ENCODE measurements at regions of chr1 and their contacts with region 1.

Region 1: DNA sequence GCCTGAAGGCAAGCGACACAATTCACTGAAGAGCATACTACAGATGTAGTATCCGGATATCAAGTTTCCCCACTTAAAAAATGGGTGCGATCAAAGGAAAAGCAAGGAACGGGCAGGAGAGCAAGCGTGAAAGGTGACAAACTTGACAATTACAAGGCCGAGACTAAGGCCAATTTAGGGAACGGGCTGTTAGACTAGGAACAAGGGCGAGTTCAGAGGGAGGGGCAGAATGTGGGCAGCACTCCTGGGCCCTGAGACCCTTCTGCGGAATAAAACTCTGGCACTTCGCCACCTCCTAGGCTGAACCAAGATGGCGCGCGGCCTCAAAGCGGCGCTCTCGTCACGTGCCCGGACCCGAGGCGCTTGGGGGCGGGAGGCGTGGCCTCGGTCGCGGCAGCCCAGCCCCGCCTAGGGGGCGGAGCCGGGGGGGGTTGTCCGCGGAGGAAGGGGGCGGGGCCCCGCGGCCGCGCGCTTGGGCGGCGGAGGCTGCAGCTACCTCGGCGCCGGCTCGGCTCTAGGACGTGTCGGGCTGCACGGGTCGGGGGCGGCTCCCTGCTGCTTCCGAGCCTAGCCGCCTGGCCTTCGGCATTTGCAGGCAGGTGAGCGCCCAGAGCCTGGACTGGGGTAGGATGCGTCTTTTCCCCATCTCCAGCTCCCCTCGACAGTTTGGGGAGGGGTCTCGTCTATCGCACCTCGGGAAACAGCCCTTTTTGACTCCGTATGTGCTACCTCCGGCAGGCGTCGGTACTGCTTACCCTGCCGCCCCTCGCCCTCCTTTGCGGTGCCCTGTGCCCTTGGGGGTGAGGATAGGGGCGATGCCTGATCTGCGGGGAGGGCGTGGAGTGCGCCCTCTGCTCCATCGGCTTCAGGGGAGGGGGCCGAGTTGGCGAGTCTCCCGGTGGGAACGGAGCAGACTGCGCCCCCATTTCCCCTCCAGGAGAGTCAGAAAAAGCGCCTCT is at the start of gene PPFIA4:
- DNase-seq: peak; percentile 95
- ATAC-seq: peak; percentile 95
- H3K4me3 Mint-ChIP-seq: peak within 1 kb of the TSS; percentile 82
- H3K27ac Mint-ChIP-seq: peak within 1 kb of the TSS; percentile 84
- H3K4me1 Mint-ChIP-seq: peaks cover 19% of the 10 kb centered on the region
- H3K27me3 Mint-ChIP-seq: peaks cover 4% of the 10 kb centered on the region
- total RNA-seq, gene PPFIA4: 51.2 to 56.4 TPM

Region 2: GRCh38 chr1:202888531-202889360 is 137.6 kb before region 1 on chr1 and contains the start of gene RABIF:
- CTCF ChIA-PET with region 1: no interaction called
- POLR2A ChIA-PET with region 1: no interaction called
- intact Hi-C with region 1: loop called in 1 of 2 experiments (anchors 1 kb)
- DNase-seq: peak; percentile 98
- ATAC-seq: peak; percentile 94
- H3K4me3 Mint-ChIP-seq: peak within 1 kb of the TSS; percentile 91
- H3K27ac Mint-ChIP-seq: peak within 1 kb of the TSS; percentile 96
- H3K4me1 Mint-ChIP-seq: peaks cover 15% of the 10 kb centered on the region
- H3K27me3 Mint-ChIP-seq: no peaks in the 10 kb centered on the region
- total RNA-seq, gene RABIF: 6.8 to 7.4 TPM

Region 3: DNA sequence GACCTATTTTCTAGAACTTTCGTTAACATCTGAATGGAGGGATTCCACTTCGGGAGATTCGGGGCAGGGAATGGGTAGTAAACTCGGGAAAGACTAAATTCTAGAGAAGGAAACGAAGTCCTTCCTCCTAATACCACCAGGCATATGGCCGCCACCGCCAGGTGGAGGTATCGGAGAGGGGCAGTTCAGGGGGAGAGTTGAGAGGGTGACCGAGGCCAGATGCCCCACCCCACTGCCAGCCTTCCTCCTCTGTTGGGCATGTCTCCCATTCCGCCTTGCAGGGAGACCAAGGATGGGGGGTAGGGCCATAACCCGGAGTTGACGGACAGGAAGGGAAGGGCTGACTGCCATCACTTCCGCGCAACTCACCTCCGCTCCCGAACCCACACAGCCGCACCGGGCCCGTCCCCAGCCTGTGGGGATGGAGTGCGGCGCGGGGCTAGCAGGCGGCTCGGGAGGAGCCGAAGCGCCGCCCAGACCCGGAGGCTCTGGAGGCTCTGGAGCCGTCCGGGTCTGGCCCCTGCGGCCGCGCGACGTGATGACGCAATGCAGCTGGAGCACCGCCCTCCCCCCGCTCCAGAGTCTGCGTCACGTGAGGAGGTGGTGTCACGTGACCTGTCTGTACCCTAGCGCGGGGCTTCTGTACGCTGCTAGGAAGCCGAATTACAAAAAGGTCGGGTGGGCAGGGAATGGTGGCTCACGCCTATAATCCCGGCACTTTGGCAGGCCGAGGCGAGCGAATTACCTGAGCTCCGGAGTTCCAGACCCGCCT is 99.4 kb before region 1 on chr1 and contains the start of gene KLHL12:
- CTCF ChIA-PET with region 1: no interaction called
- POLR2A ChIA-PET with region 1: no interaction called
- intact Hi-C with region 1: loop called in 1 of 2 experiments (anchors 1 kb)
- DNase-seq: peak; percentile 98
- ATAC-seq: peak; percentile 96
- H3K4me3 Mint-ChIP-seq: peak within 1 kb of the TSS; percentile 86
- H3K27ac Mint-ChIP-seq: peak within 1 kb of the TSS; percentile 85
- H3K4me1 Mint-ChIP-seq: peaks cover 24% of the 10 kb centered on the region
- H3K27me3 Mint-ChIP-seq: no peaks in the 10 kb centered on the region
- total RNA-seq, gene KLHL12: 32.1 to 39.1 TPM

Region 4: DNA sequence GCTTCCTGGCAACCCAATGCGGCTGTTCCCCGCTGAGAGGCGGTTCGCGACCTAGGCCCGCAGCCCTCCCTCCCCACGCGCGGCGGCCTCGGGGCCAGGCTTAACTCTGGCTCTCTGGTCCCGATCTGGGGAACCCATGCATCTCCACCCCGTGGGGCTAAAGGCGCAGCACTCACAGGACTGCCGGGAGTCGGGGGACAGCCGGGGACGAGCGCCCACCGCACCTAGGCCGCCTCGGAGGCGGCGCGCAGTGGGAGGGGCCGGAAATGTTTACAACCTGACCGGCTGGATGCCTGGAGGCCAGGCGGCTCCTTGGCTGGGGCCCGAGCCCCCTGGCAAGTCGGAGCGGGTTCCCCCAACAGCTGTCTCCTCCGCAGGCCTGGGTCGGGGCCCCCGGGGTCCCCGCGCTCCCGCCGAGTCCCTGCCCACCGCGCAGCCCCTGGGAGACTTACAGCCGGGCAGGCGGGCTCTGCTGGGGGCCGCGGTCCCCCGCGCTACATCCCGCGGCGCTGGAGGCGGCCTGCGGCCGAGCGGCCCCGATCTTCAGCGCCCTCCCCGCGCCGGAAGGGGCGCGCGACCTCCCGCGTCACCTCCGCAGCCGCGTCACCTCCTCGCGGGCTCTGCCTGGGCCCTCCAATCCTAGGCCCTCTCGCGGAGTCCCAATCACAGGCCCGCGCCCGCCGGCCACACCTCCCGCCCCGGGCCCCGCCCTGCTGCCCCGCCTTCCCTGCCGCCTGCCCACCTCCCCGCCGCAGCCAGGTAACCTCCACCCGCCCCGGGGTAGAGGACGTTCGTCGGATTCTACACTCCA is 68.4 kb before region 1 on chr1 and contains the start of gene ADIPOR1:
- CTCF ChIA-PET with region 1: no interaction called
- POLR2A ChIA-PET with region 1: no interaction called
- intact Hi-C with region 1: loop called (anchors 1 to 2 kb)
- DNase-seq: peak; percentile 96
- ATAC-seq: peak; percentile 100
- H3K4me3 Mint-ChIP-seq: peak within 1 kb of the TSS; percentile 83
- H3K27ac Mint-ChIP-seq: peak within 1 kb of the TSS; percentile 82
- H3K4me1 Mint-ChIP-seq: peaks cover 46% of the 10 kb centered on the region
- H3K27me3 Mint-ChIP-seq: no peaks in the 10 kb centered on the region
- total RNA-seq, gene ADIPOR1: 65.4 to 85.1 TPM

Region 5: DNA sequence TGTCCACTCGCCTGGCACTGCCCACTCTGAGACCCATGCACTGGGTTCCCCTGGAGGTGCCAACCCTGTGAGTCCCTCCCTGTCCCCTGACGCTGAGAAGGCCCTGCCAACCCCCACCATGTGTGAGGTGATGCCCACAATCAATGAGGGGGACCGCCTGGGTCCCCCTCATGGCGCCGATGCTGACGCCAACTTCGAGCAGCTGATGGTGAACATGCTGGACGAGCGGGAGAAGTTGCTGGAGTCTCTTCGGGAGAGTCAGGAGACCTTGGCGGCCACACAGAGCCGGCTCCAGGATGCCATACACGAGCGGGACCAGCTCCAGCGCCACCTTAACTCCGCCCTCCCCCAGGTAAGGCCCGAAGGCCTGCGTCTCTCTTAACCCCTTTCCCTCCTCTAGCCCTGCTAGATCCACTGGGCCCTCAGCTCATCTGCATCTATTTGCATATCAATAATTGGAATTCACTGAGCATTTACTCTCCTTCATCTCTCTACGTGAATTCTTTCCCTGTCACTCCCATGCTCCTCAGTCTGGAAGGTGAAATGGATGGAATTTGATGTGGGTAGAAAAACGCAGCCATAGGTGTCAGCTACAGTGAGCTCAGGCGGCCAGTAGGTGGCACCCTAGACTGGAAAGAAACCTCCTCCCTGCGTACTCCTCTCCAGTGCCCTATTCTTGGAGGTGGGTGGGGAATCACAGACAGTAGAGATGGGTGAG is 12.7 kb after region 1 on chr1:
- CTCF ChIA-PET with region 1: interaction called, 22 read pairs
- POLR2A ChIA-PET with region 1: no interaction called
- intact Hi-C with region 1: no loop called
- DNase-seq: peak; percentile 77
- ATAC-seq: peak; percentile 85
- H3K4me3 Mint-ChIP-seq: no peak overlapping the region
- H3K27ac Mint-ChIP-seq: no peak overlapping the region
- H3K4me1 Mint-ChIP-seq: peaks cover 4% of the 10 kb centered on the region
- H3K27me3 Mint-ChIP-seq: peaks cover 4% of the 10 kb centered on the region

Region 6: DNA sequence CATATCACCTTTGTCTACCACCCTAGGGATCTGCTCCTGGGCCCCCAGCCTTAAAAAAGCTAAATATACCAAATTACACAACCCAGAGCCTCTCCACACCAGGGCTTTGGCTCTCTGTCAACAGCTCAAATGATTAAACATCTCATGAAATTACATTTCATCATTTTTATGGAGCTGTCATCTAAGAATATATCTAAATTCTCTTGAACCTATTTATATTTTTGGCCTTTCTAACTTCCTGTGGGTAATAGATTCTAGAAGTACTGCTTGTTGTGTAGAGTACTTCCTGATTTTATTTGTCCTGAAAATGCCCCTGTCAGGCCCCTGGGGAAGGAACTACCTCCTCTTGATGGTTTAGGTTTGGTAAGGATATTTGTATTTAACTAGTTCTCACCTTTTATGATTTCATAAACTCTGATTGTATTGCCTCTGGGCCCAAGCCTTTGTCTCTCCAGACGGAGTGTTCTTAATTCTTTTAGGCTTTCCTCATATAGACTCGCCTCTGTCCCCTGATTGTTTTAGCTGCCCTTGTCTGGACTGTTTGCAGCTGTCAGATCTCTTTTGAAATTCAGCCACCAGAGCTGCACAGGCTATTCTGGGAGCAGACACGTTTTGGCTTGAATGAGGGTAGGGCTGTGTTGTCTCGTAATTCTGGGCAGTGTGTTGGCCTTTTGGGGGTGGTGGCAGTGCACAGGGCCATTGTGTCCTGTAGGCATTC is 42.9 kb after region 1 on chr1:
- CTCF ChIA-PET with region 1: no interaction called
- POLR2A ChIA-PET with region 1: no interaction called
- intact Hi-C with region 1: no loop called
- DNase-seq: no peak
- ATAC-seq: no peak
- H3K4me3 Mint-ChIP-seq: no peak overlapping the region
- H3K27ac Mint-ChIP-seq: no peak overlapping the region
- H3K4me1 Mint-ChIP-seq: no peaks in the 10 kb centered on the region
- H3K27me3 Mint-ChIP-seq: peaks cover 14% of the 10 kb centered on the region

Region 7: GRCh38 chr1:203486618-203487370 is 460.5 kb after region 1 on chr1:
- CTCF ChIA-PET with region 1: no interaction called
- POLR2A ChIA-PET with region 1: no interaction called
- intact Hi-C with region 1: loop called in 1 of 2 experiments (anchors 5 kb)
- DNase-seq: no peak
- ATAC-seq: no peak
- H3K4me3 Mint-ChIP-seq: peak overlapping the region; percentile 56
- H3K27ac Mint-ChIP-seq: no peak overlapping the region
- H3K4me1 Mint-ChIP-seq: peaks cover 7% of the 10 kb centered on the region
- H3K27me3 Mint-ChIP-seq: no peaks in the 10 kb centered on the region

Region 8: GRCh38 chr1:203968728-203969127 is 942.4 kb after region 1 on chr1:
- CTCF ChIA-PET with region 1: no interaction called
- POLR2A ChIA-PET with region 1: no interaction called
- intact Hi-C with region 1: no loop called
- DNase-seq: no peak
- ATAC-seq: no peak
- H3K4me3 Mint-ChIP-seq: no peak overlapping the region
- H3K27ac Mint-ChIP-seq: no peak overlapping the region
- H3K4me1 Mint-ChIP-seq: no peaks in the 10 kb centered on the region
- H3K27me3 Mint-ChIP-seq: no peaks in the 10 kb centered on the region